HepG2 (cell line): ENCODE measurements at regions of chr14 and their contacts with region 1.

Region 1: DNA sequence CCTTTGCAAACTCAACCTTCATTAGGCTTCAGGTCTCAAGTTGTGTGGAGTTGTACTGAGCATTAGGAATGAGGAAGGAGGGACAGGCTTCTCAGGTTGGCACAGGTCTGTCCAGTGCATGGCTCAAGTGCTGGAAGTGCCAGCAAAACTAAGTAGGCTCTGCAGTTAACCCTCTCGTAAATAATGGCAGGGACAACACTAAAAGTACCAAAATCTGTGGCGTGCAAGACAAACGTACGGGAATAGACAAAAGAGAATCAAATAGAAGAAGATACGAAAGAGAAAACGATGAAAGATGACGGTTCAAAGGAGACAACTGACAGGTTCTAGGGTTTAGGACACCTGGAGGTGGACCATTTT is 612 bp downstream of the TRAPPC6B start:
- DNase-seq: no peak
- ATAC-seq: peak; percentile 44
- H3K4me3 ChIP-seq: peak overlapping the region; percentile 71 to 96 (median 90)
- H3K27ac ChIP-seq: peak overlapping the region; percentile 86
- H3K4me1 ChIP-seq: peaks cover 63% of the 10 kb centered on the region
- H3K27me3 ChIP-seq: peaks cover 0 to 7% of the 10 kb centered on the region in 2 experiments; a peak in 1 of 5 replicates
- CTCF ChIP-seq: no peak
- EP300 ChIP-seq: no peak
- POLR2A ChIP-seq: no peak
- RAD21 ChIP-seq: no peak

Region 2: GRCh38 chr14:38915125-38915524 is 254.4 kb before region 1 on chr14:
- CTCF ChIA-PET with region 1: no interaction called
- POLR2A ChIA-PET with region 1: no interaction called
- in situ Hi-C with region 1: no loop called
- intact Hi-C with region 1: no loop called
- DNase-seq: no peak
- ATAC-seq: no peak
- H3K4me3 ChIP-seq: no peak overlapping the region
- H3K27ac ChIP-seq: no peak overlapping the region
- H3K4me1 ChIP-seq: no peaks in the 10 kb centered on the region
- H3K27me3 ChIP-seq: no peaks in the 10 kb centered on the region
- CTCF ChIP-seq: no peak
- EP300 ChIP-seq: no peak
- POLR2A ChIP-seq: no peak
- RAD21 ChIP-seq: no peak

Region 3: GRCh38 chr14:39025810-39026627 is 143.5 kb before region 1 on chr14:
- CTCF ChIA-PET with region 1: no interaction called
- POLR2A ChIA-PET with region 1: interaction called, 47 read pairs
- in situ Hi-C with region 1: no loop called
- intact Hi-C with region 1: loop called (anchors 2 kb)
- DNase-seq: peak; percentile 87
- ATAC-seq: peak; percentile 74
- H3K4me3 ChIP-seq: peak overlapping the region in 1 of 3 experiments; percentile 8; a peak in 1 of 6 replicates
- H3K27ac ChIP-seq: peak overlapping the region; percentile 74
- H3K4me1 ChIP-seq: peaks cover 48% of the 10 kb centered on the region
- H3K27me3 ChIP-seq: no peaks in the 10 kb centered on the region
- CTCF ChIP-seq: 0 out of 2 replicates have a peak, but pooled peaks have one; percentile 8
- EP300 ChIP-seq: peak in 1 of 2 experiments; percentile 86; a peak in 2 of 4 replicates
- POLR2A ChIP-seq: no peak
- RAD21 ChIP-seq: peak; percentile 32; the same call in 1 of the 2 replicates

Region 4: DNA sequence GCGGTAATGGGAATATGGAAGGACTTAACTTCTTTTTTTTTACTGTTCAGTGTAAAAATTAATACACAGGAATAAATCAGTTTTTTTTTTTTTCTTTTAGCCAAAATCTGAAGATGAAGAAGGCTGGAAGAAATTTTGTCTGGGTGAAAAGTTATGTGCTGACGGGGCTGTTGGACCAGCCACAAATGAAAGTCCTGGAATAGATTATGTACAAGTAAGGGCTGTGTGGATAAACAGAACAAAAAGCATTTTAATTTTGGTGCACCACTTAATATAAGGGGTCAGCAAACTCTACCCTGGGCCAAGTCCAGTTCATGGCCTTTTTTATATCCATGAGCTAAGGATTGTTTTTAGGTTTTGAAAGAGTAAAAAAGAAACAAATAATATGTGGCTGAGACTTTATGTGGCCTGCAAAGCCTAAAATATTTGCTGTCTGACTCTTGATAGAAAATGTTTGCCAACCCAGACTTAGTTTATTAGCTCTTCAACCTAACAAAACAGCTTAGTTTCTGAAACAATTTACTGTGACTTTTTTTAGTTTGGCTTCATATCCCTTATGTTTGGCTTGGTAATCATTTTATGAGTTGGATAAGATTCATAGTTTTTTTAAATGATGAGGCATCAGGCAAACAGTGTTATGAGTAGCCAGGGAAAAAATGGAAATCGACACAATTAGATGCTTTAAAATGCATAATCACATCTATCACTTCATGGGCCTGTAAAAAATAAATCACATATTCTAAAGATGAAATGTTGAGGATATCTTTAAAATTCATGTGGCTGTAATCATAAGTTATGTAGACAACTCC is 47.0 kb before region 1 on chr14:
- CTCF ChIA-PET with region 1: no interaction called
- POLR2A ChIA-PET with region 1: interaction called, 11 read pairs
- in situ Hi-C with region 1: no loop called
- intact Hi-C with region 1: no loop called
- DNase-seq: no peak
- ATAC-seq: no peak
- H3K4me3 ChIP-seq: no peak overlapping the region
- H3K27ac ChIP-seq: no peak overlapping the region
- H3K4me1 ChIP-seq: no peaks in the 10 kb centered on the region
- H3K27me3 ChIP-seq: no peaks in the 10 kb centered on the region
- CTCF ChIP-seq: no peak
- EP300 ChIP-seq: no peak
- POLR2A ChIP-seq: no peak
- RAD21 ChIP-seq: no peak

Region 5: DNA sequence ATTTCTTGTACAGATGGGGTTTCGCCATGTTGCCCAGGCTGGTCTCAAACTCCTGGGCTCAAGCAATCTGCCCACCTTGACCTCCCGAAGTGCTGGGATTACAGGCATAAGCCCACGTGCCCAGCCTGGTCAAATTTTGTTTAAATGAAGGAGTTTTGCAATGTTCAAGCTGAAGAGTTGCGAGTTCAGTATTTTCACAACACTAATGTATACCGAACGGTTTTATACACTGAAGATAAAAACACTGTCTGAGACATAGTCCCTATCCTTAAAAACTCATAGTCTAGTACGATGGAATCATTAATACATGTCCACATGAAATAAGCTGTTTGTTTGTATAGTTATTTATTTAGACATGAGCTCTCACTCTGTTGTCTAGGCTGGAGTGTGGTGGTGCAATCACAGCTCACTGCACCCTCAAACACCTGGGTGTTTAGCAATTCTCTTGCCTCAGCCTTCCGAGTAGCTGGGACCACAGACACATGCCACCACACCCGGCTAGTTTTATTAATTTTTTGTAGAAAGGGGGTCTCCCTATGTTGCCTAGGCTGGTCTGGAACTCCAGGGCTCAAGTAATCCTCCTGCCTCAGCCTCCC is 14.8 kb before region 1 on chr14:
- CTCF ChIA-PET with region 1: no interaction called
- POLR2A ChIA-PET with region 1: interaction called, 122 read pairs
- in situ Hi-C with region 1: no loop called
- intact Hi-C with region 1: no loop called
- DNase-seq: no peak
- ATAC-seq: peak; percentile 61
- H3K4me3 ChIP-seq: no peak overlapping the region
- H3K27ac ChIP-seq: no peak overlapping the region
- H3K4me1 ChIP-seq: peaks cover 6% of the 10 kb centered on the region
- H3K27me3 ChIP-seq: no peaks in the 10 kb centered on the region
- CTCF ChIP-seq: no peak
- EP300 ChIP-seq: no peak
- POLR2A ChIP-seq: no peak
- RAD21 ChIP-seq: no peak

Region 6: GRCh38 chr14:39203659-39204606 is 34.4 kb after region 1 on chr14:
- CTCF ChIA-PET with region 1: no interaction called
- POLR2A ChIA-PET with region 1: interaction called, 45 read pairs
- in situ Hi-C with region 1: no loop called
- intact Hi-C with region 1: no loop called
- DNase-seq: peak; percentile 70
- ATAC-seq: peak; percentile 83
- H3K4me3 ChIP-seq: peak overlapping the region in 1 of 3 experiments; percentile 27; a peak in 2 of 6 replicates
- H3K27ac ChIP-seq: peak overlapping the region; percentile 49
- H3K4me1 ChIP-seq: peaks cover 30% of the 10 kb centered on the region
- H3K27me3 ChIP-seq: no peaks in the 10 kb centered on the region
- CTCF ChIP-seq: no peak
- EP300 ChIP-seq: no peak
- POLR2A ChIP-seq: no peak
- RAD21 ChIP-seq: no peak

Region 7: GRCh38 chr14:39266871-39267591 is 97.5 kb after region 1 on chr14:
- CTCF ChIA-PET with region 1: no interaction called
- POLR2A ChIA-PET with region 1: interaction called, 138 read pairs
- in situ Hi-C with region 1: no loop called
- intact Hi-C with region 1: loop called (anchors 2 kb)
- DNase-seq: peak; percentile 86
- ATAC-seq: peak; percentile 88
- H3K4me3 ChIP-seq: peak overlapping the region; percentile 72 to 91 (median 74)
- H3K27ac ChIP-seq: peak overlapping the region; percentile 93
- H3K4me1 ChIP-seq: peaks cover 56% of the 10 kb centered on the region
- H3K27me3 ChIP-seq: no peaks in the 10 kb centered on the region; a peak in 1 of 5 replicates
- CTCF ChIP-seq: no peak
- EP300 ChIP-seq: no peak
- POLR2A ChIP-seq: peak in 1 of 2 experiments; percentile 88; a peak in 2 of 4 replicates
- RAD21 ChIP-seq: no peak; the same call in none of the 2 replicates

Region 8: GRCh38 chr14:39939023-39939422 is 769.5 kb after region 1 on chr14:
- CTCF ChIA-PET with region 1: no interaction called
- POLR2A ChIA-PET with region 1: no interaction called
- in situ Hi-C with region 1: no loop called
- intact Hi-C with region 1: no loop called
- DNase-seq: no peak
- ATAC-seq: peak; percentile 31; the same call in 1 of the 3 replicates
- H3K4me3 ChIP-seq: no peak overlapping the region
- H3K27ac ChIP-seq: no peak overlapping the region
- H3K4me1 ChIP-seq: no peaks in the 10 kb centered on the region
- H3K27me3 ChIP-seq: no peaks in the 10 kb centered on the region
- CTCF ChIP-seq: no peak
- EP300 ChIP-seq: no peak
- POLR2A ChIP-seq: no peak
- RAD21 ChIP-seq: no peak